Colonic mucosa (tissue), 4 donors: ENCODE measurements at regions of chr18 and their contacts with region 1.

Region 1: GRCh38 chr18:70195852-70196434 is 9.5 kb downstream of the RTTN start:
- DNase-seq: peak; percentile 25
- H3K4me3 ChIP-seq: no peak overlapping the region
- H3K27ac ChIP-seq: no peak overlapping the region
- H3K4me1 ChIP-seq: no peaks in the 10 kb centered on the region
- H3K27me3 ChIP-seq: no peaks in the 10 kb centered on the region
- CTCF ChIP-seq: peak; percentile 75

Region 2: DNA sequence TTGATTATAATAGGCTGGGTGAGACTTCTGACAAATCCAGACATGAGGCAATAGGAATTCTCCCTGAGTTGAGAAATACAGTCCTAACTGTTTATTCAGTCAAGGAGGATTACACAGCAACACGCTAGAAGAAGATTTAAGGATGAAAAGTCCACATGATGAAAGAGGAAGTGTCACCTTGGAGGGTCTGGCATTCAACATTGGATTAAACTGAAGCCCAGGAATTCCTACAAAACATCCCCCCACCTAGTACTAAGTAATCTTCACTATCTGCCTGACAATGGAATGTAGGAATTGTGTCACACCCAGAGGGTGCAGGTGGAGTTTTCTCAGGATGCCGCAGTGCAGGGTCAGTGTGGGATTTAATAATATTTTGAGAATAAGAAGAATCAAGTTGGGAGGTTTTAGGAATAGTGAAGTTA is 235.3 kb after region 1 on chr18:
- intact Hi-C with region 1: loop called (anchors 2 kb)
- DNase-seq: no peak
- H3K4me3 ChIP-seq: no peak overlapping the region
- H3K27ac ChIP-seq: no peak overlapping the region
- H3K4me1 ChIP-seq: no peaks in the 10 kb centered on the region
- H3K27me3 ChIP-seq: no peaks in the 10 kb centered on the region
- CTCF ChIP-seq: no peak

Region 3: GRCh38 chr18:70454704-70455322 is 258.9 kb after region 1 on chr18:
- intact Hi-C with region 1: loop called (anchors 5 kb)
- DNase-seq: peak; percentile 59
- H3K4me3 ChIP-seq: no peak overlapping the region
- H3K27ac ChIP-seq: no peak overlapping the region
- H3K4me1 ChIP-seq: no peaks in the 10 kb centered on the region
- H3K27me3 ChIP-seq: no peaks in the 10 kb centered on the region
- CTCF ChIP-seq: peak; percentile 66

Region 4: DNA sequence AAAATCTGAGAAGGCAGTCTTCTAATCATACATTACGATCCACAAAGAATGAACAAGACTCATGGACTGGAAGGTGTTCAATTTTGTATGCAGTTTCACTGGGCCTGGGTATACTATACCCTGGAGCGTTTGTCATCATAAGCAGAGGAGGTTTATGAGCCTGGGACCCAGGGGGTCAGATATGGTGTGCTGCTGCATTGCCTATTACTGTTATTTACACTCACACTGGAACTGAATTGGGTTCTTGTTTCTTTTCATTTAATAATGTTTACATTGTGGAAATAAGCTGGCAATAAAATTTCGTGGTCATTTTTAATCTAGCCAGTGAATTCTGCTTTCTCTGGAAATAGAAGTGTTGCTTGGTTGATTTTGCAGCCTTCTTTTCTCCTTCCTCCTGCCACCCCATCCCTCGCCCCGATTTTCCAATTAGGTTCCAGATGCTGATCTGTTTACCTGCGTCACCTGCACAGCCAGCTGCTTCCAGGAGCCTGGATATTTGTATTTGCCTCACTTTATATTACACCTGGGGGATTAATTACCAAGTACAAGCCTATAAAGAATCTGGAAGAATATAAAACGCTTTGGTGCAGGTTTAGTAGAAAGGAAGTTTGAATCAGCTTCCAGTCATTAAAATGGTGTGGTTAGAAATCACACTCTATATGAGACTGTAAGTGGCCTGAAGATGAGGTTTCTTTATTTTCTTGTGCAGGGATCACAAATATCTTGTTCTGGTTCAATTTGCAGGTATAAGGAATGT is 327.3 kb after region 1 on chr18:
- intact Hi-C with region 1: no loop called
- DNase-seq: no peak
- H3K4me3 ChIP-seq: no peak overlapping the region
- H3K27ac ChIP-seq: no peak overlapping the region
- H3K4me1 ChIP-seq: no peaks in the 10 kb centered on the region
- H3K27me3 ChIP-seq: no peaks in the 10 kb centered on the region
- CTCF ChIP-seq: no peak